ENCODE measurements at regions of chr2 and their contacts with region 1.

Region 1: DNA sequence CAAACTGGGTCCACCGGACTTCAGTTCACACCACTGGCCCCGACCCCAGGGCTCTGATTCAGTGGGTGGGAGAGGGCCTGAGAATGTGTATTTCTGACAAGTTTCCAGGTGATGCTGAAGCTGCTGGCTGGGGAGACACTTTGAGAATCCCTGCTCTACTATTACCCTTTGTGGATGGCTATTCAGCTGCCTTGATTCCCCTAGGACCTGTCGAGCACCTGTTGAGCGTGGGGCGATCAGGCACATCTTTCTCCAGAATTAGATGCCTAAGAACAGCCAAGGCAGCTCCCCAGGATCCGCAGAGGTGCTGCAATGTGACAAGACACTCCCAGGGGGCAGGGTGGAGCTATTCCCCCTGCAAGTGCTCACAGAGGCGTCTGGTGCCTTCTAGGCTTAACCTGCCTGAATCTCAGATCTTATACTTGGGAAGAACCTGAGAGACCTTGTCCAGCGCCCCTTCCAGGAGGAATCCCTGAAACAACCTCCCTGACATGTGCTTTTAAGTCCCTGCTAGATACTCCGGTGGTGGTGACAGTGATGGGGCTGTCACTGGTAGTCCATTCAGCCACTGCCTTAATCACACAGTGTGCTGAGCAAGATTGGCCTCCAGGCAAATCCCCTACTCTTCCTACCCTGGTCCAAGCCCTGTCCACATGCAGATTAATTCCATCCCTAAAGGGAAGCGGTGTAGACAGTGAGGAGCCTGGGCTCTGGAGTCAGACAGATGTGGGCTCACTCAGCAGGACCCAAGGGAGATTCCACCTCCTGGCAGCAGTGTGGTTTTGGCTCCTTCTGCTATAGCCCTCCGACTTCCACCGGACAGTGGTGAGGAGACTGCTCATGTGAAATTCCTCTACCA is 43.4 kb upstream of the OTOF start:
- DNase-seq: peak; percentile 60 to 73 (median 66)
- ATAC-seq: peak; percentile 91
- H3K4me3 ChIP-seq: no peak overlapping the region
- H3K27ac ChIP-seq: no peak overlapping the region
- H3K4me1 ChIP-seq: peaks cover 3 to 6% of the 10 kb centered on the region in 2 experiments; a peak in 2 of 5 replicates
- H3K27me3 ChIP-seq: peaks cover 24 to 72% of the 10 kb centered on the region in 2 experiments
- CTCF ChIP-seq: peak; percentile 78 to 79 (median 78)
- EP300 ChIP-seq: no peak
- POLR2A ChIP-seq: no peak
- RAD21 ChIP-seq: peak; percentile 69 to 79

Region 2: DNA sequence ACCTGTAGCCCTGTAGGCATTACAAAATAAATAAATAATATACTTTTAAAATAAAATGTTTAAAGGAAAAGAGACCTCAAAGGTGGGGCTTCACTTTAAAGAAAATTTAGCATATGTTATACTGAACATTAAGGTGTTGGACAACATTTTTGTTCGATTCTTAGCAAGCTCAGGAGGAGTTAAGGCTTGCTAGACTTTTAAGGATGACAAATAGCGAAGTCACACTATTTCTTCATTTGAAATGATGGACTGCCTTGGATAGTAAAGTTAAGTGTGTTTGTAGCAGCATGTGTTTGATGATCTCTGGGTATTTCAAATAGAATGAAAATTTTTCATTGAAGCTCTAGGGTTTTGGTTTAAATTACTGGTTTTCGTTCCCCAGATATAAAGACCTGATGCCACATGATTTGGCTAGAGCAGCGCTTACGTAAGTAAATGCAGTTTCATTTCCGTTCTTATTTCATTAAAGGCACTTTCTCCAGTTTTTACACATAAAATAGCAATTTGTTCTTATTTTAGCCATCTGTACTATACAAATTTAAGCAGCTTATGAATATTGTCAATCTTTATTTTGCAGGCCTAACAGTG is 251.6 kb before region 1 on chr2:
- CTCF ChIA-PET with region 1: no interaction called
- POLR2A ChIA-PET with region 1: no interaction called
- in situ Hi-C with region 1: no loop called
- intact Hi-C with region 1: no loop called
- DNase-seq: no peak
- ATAC-seq: no peak
- H3K4me3 ChIP-seq: no peak overlapping the region
- H3K27ac ChIP-seq: no peak overlapping the region
- H3K4me1 ChIP-seq: peaks cover 0 to 11% of the 10 kb centered on the region in 2 experiments; a peak in 1 of 5 replicates
- H3K27me3 ChIP-seq: no peaks in the 10 kb centered on the region
- CTCF ChIP-seq: no peak
- EP300 ChIP-seq: no peak
- POLR2A ChIP-seq: no peak
- RAD21 ChIP-seq: no peak

Region 3: GRCh38 chr2:26555246-26556133 is 34.2 kb after region 1 on chr2:
- CTCF ChIA-PET with region 1: interaction called, 4 read pairs
- POLR2A ChIA-PET with region 1: no interaction called
- in situ Hi-C with region 1: no loop called
- intact Hi-C with region 1: loop called (anchors 2 kb)
- DNase-seq: peak; percentile 38 to 48 (median 48)
- ATAC-seq: peak; percentile 82
- H3K4me3 ChIP-seq: no peak overlapping the region
- H3K27ac ChIP-seq: no peak overlapping the region
- H3K4me1 ChIP-seq: peaks cover 3 to 4% of the 10 kb centered on the region in 2 experiments; a peak in 2 of 5 replicates
- H3K27me3 ChIP-seq: peaks cover 25 to 48% of the 10 kb centered on the region in 2 experiments; a peak in 4 of 5 replicates
- CTCF ChIP-seq: peak; percentile 50 to 58 (median 58)
- EP300 ChIP-seq: no peak
- POLR2A ChIP-seq: no peak
- RAD21 ChIP-seq: peak; percentile 30 to 49; a peak in 3 of 4 replicates

Region 4: GRCh38 chr2:26577434-26578112 is 56.3 kb after region 1 on chr2:
- CTCF ChIA-PET with region 1: interaction called, 31 read pairs
- POLR2A ChIA-PET with region 1: interaction called, 3 read pairs
- in situ Hi-C with region 1: no loop called
- intact Hi-C with region 1: loop called (anchors 1 kb)
- DNase-seq: peak; percentile 74 to 79 (median 78)
- ATAC-seq: peak; percentile 92
- H3K4me3 ChIP-seq: no peak overlapping the region
- H3K27ac ChIP-seq: no peak overlapping the region
- H3K4me1 ChIP-seq: no peaks in the 10 kb centered on the region; a peak in 1 of 5 replicates
- H3K27me3 ChIP-seq: peaks cover 39 to 96% of the 10 kb centered on the region in 2 experiments
- CTCF ChIP-seq: peak; percentile 89 to 94 (median 92)
- EP300 ChIP-seq: no peak
- POLR2A ChIP-seq: no peak
- RAD21 ChIP-seq: peak; percentile 88 to 92